Breast epithelium (tissue), 4 donors: ENCODE measurements at regions of chr9 and their contacts with region 1.

Region 1: GRCh38 chr9:121674952-121675351 is 23.5 kb downstream of the DAB2IP start:
- DNase-seq: no peak
- H3K4me3 ChIP-seq: no peak overlapping the region
- H3K27ac ChIP-seq: no peak overlapping the region
- H3K4me1 ChIP-seq: no peaks in the 10 kb centered on the region
- H3K27me3 ChIP-seq: no peaks in the 10 kb centered on the region
- CTCF ChIP-seq: no peak
- POLR2A ChIP-seq: no peak

Region 2: GRCh38 chr9:121393318-121393717 is 281.6 kb before region 1 on chr9:
- intact Hi-C with region 1: no loop called
- DNase-seq: no peak
- H3K4me3 ChIP-seq: no peak overlapping the region
- H3K27ac ChIP-seq: peak overlapping the region in 1 of 2 donors; percentile 9
- H3K4me1 ChIP-seq: no peaks in the 10 kb centered on the region
- H3K27me3 ChIP-seq: no peaks in the 10 kb centered on the region
- CTCF ChIP-seq: no peak
- POLR2A ChIP-seq: no peak

Region 3: DNA sequence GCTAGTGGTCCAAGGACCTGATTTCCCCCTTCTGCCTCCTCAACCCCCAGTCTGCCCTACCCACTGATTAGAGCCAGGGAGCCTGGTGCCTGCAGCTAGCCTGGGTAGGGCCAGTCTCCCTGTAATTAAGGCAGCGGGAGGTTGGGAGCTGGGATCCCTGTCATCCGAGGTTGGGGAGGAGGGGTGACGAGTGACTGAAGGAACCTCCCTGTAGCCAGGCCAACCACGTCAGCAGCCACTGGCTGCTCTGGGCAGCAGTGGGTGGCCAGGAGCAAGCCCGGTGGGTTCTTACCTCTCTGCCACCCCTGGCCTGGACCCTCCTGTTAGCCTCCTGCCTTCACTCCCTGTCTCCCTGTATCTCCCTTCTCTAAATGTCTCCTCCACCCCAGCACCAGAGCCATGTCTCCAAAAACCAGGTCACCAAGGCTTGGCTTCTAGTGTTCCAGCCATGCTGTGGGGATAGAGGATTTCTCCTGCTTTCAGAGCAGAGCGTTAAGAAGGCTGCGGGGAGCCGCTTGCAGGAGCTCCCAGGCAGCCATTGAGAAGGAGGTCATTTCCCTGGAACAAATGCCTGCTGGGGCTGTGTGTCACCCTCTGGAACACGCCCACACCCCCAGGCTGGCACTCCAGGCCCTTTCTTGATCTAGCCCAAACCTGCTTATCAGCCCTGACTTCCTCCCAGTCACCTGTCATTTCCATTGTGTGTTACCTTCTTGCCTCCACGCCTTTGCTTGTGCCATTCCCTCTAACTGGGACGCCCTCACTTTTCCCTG is 110.3 kb before region 1 on chr9:
- intact Hi-C with region 1: loop called (anchors 1 kb)
- DNase-seq: no peak
- H3K4me3 ChIP-seq: no peak overlapping the region
- H3K27ac ChIP-seq: no peak overlapping the region
- H3K4me1 ChIP-seq: peaks cover 9 to 15% of the 10 kb centered on the region in 2 donors
- H3K27me3 ChIP-seq: no peaks in the 10 kb centered on the region
- CTCF ChIP-seq: no peak
- POLR2A ChIP-seq: no peak

Region 4: DNA sequence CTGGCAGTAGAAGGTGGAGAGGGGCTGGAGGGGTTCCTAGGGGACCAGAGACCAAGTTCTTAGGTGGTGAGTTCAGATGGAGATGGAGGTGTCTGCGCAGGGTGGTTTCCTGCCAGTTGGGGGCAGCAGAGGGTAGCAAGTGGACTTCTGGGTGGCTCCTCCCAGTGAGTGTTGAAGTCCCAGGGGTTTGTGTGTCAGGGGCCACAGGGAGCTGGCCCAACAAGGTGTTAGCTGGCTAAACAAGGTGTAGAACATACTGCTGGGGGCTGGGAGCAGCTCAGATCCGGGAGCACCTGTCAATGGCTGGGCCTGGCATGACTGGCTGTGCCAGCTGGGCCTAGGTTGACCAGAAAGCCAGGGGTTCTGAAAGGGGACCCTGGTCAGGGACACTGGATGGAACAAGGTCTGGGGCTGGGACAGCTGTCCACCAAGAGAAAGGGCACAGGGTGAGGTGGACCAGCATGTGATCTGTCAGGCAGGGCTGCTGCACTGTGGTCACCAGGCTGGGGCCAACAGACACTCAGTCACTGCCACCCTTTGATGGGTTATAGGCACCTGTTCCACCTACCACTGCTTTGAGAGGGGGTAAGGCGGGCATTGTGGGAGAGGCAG is 12.1 kb after region 1 on chr9:
- intact Hi-C with region 1: no loop called
- DNase-seq: peak; percentile 62 to 77
- H3K4me3 ChIP-seq: no peak overlapping the region
- H3K27ac ChIP-seq: peak overlapping the region in 1 of 2 donors; percentile 1
- H3K4me1 ChIP-seq: no peaks in the 10 kb centered on the region
- H3K27me3 ChIP-seq: no peaks in the 10 kb centered on the region
- CTCF ChIP-seq: peak; percentile 58 to 88 (median 78)
- POLR2A ChIP-seq: no peak